ENCODE measurements at regions of chr4 and their contacts with region 1.

Region 1: DNA sequence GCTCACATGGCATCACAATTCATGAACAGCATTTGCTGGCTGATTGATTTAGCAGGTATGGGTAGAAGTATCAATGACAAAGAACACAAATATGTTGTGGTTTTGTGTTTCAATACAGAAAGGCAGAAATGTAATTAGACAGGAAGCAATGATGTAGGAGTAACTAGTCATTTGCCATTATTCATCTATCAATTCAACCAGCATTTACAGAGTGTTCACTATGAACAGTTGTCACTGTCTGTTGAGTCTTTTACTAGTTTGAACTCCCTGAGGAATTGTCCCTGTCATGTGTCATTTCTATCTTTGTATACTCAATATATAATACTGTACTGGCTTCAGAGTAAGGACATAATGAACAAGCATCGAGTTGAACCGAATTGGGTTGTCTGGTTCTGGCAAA is 51.5 kb upstream of the ARHGAP24 start:
- DNase-seq: no peak
- H3K4me3 ChIP-seq: no peak overlapping the region
- H3K4me3 Mint-ChIP-seq: no peak overlapping the region
- H3K27ac Mint-ChIP-seq: no peak overlapping the region
- H3K4me1 ChIP-seq: no peaks in the 10 kb centered on the region
- H3K4me1 Mint-ChIP-seq: no peaks in the 10 kb centered on the region
- H3K27me3 ChIP-seq: no peaks in the 10 kb centered on the region
- H3K27me3 Mint-ChIP-seq: no peaks in the 10 kb centered on the region
- CTCF ChIP-seq: no peak

Region 2: GRCh38 chr4:85474818-85475630 is 51.6 kb after region 1 on chr4 and contains the start of gene ARHGAP24:
- CTCF ChIA-PET with region 1: interaction called, 8 read pairs
- POLR2A ChIA-PET with region 1: no interaction called
- intact Hi-C with region 1: loop called (anchors 2 kb)
- DNase-seq: peak; percentile 86 to 89
- H3K4me3 ChIP-seq: peak within 1 kb of the TSS; percentile 45
- H3K4me3 Mint-ChIP-seq: peak within 1 kb of the TSS; percentile 83
- H3K27ac Mint-ChIP-seq: peak within 1 kb of the TSS; percentile 73
- H3K4me1 ChIP-seq: peaks cover 5% of the 10 kb centered on the region; the same call in 1 of the 2 replicates
- H3K4me1 Mint-ChIP-seq: no peaks in the 10 kb centered on the region
- H3K27me3 ChIP-seq: no peaks in the 10 kb centered on the region
- H3K27me3 Mint-ChIP-seq: peaks cover 5% of the 10 kb centered on the region
- CTCF ChIP-seq: no peak
- total RNA-seq, gene ARHGAP24: 2.5 and 2.8 TPM in 2 replicates

Region 3: GRCh38 chr4:85509882-85510631 is 86.6 kb after region 1 on chr4:
- CTCF ChIA-PET with region 1: no interaction called
- POLR2A ChIA-PET with region 1: no interaction called
- intact Hi-C with region 1: loop called (anchors 5 kb)
- DNase-seq: no peak
- H3K4me3 ChIP-seq: no peak overlapping the region
- H3K4me3 Mint-ChIP-seq: no peak overlapping the region
- H3K27ac Mint-ChIP-seq: no peak overlapping the region
- H3K4me1 ChIP-seq: peaks cover 8% of the 10 kb centered on the region; the same call in 1 of the 2 replicates
- H3K4me1 Mint-ChIP-seq: peaks cover 8% of the 10 kb centered on the region
- H3K27me3 ChIP-seq: no peaks in the 10 kb centered on the region
- H3K27me3 Mint-ChIP-seq: no peaks in the 10 kb centered on the region
- CTCF ChIP-seq: no peak

Region 4: DNA sequence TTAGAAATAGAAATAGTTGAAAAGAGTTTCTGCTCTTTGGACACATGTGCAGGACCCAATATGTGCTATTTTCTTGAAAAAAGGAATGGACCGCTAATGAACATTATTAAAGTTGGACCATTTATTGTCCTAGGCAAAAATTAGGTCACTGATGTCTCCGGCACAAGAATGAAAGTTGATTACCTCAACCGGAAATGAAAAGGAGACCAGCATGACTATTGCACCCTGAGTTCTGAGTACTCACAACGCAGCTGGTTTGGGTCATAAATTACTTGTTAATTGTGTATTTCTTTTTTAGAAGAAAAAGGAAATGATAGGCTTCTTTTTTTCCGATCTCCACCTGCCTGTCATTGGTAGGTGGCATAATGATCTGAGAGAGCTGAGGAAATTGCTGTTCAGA is 284.2 kb after region 1 on chr4:
- CTCF ChIA-PET with region 1: no interaction called
- POLR2A ChIA-PET with region 1: no interaction called
- intact Hi-C with region 1: loop called (anchors 1 kb)
- DNase-seq: no peak
- H3K4me3 ChIP-seq: no peak overlapping the region
- H3K4me3 Mint-ChIP-seq: no peak overlapping the region
- H3K27ac Mint-ChIP-seq: no peak overlapping the region
- H3K4me1 ChIP-seq: no peaks in the 10 kb centered on the region
- H3K4me1 Mint-ChIP-seq: no peaks in the 10 kb centered on the region
- H3K27me3 ChIP-seq: no peaks in the 10 kb centered on the region
- H3K27me3 Mint-ChIP-seq: peaks cover 4% of the 10 kb centered on the region
- CTCF ChIP-seq: no peak